CD4-positive, alpha-beta T cell (primary cell): ENCODE measurements at regions of chr11 and their contacts with region 1.

Region 1: DNA sequence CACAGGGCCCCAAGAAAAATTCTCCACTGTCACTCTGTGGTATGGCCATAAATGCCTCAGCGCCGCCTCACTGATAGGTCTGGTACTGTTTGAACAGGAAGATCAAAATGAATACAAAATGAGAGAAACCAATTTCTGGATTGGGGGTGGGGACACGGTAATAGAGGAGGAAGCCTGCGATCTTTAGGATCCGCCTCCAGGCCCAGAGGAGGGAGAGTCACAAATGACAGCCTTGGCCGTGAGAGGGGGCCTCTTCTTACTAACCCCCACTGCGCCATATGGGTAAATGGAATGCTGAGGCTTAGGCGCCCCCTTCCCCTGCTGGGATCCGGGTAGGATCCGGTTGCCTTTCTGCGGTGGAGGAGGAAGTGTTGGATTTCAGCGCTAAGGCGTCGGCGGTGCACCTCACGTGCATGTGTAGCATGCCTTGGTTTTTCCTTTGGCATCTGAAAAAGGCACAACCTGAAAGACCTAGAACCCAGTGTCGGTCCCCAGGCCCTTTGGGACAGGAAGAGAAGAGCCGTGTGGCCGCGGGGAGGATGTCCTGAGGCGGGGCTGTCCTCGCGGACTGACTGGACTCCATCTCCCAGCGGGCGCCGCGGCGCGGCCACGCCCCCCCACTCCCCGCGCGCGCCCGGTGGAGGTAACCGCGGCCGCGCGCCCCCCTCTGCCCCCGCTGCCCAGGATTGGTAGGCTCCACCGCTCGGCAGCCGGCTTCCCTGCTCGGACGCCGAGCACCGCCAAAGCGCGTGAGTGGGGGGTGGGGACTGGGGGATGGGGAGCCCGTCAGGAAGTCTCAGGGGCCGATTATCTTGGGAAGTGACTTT is 718 bp upstream of the MADD start:
- DNase-seq: peak; percentile 74 to 93 (median 84)
- ATAC-seq: peak; percentile 62
- H3K4me3 ChIP-seq: peak overlapping the region; percentile 71
- H3K4me3 Mint-ChIP-seq: peak overlapping the region; percentile 94
- H3K27ac ChIP-seq: peak overlapping the region; percentile 91 to 94
- H3K27ac Mint-ChIP-seq: peak overlapping the region; percentile 99
- H3K4me1 ChIP-seq: peaks cover 58% of the 10 kb centered on the region
- H3K4me1 Mint-ChIP-seq: peaks cover 57% of the 10 kb centered on the region
- H3K27me3 ChIP-seq: no peaks in the 10 kb centered on the region
- H3K27me3 Mint-ChIP-seq: no peaks in the 10 kb centered on the region
- CTCF ChIP-seq: peak; percentile 22

Region 2: GRCh38 chr11:47213985-47214564 is 55.1 kb before region 1 on chr11:
- CTCF ChIA-PET with region 1: interaction called, 3 read pairs
- POLR2A ChIA-PET with region 1: interaction called, 24 read pairs
- intact Hi-C with region 1: loop called (anchors 1 kb)
- DNase-seq: peak; percentile 68 to 92 (median 78)
- ATAC-seq: peak; percentile 70
- H3K4me3 ChIP-seq: peak overlapping the region; percentile 67
- H3K4me3 Mint-ChIP-seq: peak overlapping the region; percentile 100
- H3K27ac ChIP-seq: peak overlapping the region; percentile 80 to 91
- H3K27ac Mint-ChIP-seq: peak overlapping the region; percentile 97
- H3K4me1 ChIP-seq: peaks cover 32% of the 10 kb centered on the region
- H3K4me1 Mint-ChIP-seq: peaks cover 38% of the 10 kb centered on the region
- H3K27me3 ChIP-seq: no peaks in the 10 kb centered on the region
- H3K27me3 Mint-ChIP-seq: no peaks in the 10 kb centered on the region
- CTCF ChIP-seq: no peak

Region 3: DNA sequence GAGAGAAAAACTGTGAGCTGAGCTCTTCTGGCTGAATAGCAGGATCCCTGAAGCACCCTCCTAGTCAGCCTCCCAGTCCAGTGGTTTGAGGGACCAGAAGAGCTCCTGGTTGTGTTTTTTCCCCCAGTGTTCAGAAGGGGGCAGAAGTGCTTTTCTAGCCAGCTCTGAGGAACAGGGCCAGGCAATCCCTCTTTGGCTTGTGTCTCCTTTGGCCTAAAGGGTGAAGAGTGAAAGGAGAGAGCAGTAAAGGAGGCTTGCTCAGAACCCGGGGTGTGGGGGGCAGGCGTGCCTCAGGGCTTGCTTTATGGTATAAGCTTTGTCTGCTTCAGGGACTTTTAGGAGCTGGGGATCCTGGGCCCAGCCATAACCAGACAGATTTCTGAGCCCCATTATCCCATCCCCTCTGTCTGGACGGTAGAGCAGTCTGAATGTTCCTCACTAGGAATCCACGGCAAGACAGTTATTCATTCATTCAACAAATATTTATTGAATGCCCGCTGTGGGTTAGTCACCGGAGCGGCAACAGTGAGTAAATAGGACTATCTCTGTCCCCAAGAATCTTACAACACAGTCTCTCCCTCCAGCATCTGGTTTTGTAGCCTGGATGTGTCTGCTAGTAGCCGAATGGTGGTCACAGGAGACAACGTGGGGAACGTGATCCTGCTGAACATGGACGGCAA is 35.1 kb before region 1 on chr11:
- CTCF ChIA-PET with region 1: interaction called, 3 read pairs
- POLR2A ChIA-PET with region 1: interaction called, 19 read pairs
- intact Hi-C with region 1: loop called (anchors 1 to 5 kb)
- DNase-seq: peak in 8 of 14 experiments; percentile 9 to 69 (median 22)
- ATAC-seq: no peak
- H3K4me3 ChIP-seq: peak overlapping the region; percentile 10
- H3K4me3 Mint-ChIP-seq: peak overlapping the region; percentile 80
- H3K27ac ChIP-seq: peak overlapping the region; percentile 65 to 72
- H3K27ac Mint-ChIP-seq: peak overlapping the region; percentile 94
- H3K4me1 ChIP-seq: peaks cover 24% of the 10 kb centered on the region
- H3K4me1 Mint-ChIP-seq: peaks cover 29% of the 10 kb centered on the region
- H3K27me3 ChIP-seq: no peaks in the 10 kb centered on the region
- H3K27me3 Mint-ChIP-seq: no peaks in the 10 kb centered on the region
- CTCF ChIP-seq: peak; percentile 11

Region 4: DNA sequence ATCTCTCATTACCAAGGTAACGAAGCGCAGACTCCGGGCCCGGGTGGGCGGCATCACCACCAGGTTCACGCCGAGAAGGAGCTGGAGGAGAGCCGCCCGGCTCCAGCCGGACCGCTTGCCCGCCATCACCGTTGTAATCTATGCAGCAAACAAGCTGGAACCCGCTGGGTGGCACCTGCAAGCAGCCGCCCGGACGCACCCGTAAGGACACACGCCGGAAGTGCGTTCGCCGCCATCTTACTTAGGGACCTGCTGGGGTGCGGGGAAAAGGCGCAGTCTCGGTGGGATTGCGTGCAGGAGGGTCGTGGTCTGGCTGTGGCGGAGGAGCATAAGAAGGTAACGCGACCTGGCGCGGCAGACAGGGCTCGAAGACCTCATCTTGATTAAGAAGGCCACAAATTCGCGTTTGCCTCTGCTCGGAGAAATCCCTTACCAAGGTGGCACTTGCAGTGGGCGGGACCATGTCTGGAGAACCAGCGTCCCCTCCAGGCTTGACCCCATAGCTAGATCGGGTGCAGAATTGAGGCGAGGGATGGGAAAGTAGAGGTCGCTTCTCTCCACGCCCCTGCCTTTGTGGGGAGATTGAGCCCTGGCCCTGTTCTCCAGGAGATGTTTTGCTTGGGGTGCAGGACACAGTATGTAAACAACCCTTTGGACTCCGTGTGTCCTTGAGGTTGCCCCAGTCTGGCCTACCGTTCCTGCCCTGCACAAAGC is 20.4 kb before region 1 on chr11 and contains the start of gene ACP2:
- CTCF ChIA-PET with region 1: interaction called, 10 read pairs
- POLR2A ChIA-PET with region 1: interaction called, 18 read pairs
- intact Hi-C with region 1: loop called (anchors 1 kb)
- DNase-seq: peak; percentile 78 to 93 (median 82)
- ATAC-seq: peak; percentile 97
- H3K4me3 ChIP-seq: peak within 1 kb of the TSS; percentile 77
- H3K4me3 Mint-ChIP-seq: peak within 1 kb of the TSS; percentile 94
- H3K27ac ChIP-seq: peak within 1 kb of the TSS; percentile 75 to 82
- H3K27ac Mint-ChIP-seq: peak within 1 kb of the TSS; percentile 93
- H3K4me1 ChIP-seq: peaks cover 28% of the 10 kb centered on the region
- H3K4me1 Mint-ChIP-seq: peaks cover 29% of the 10 kb centered on the region
- H3K27me3 ChIP-seq: no peaks in the 10 kb centered on the region
- H3K27me3 Mint-ChIP-seq: no peaks in the 10 kb centered on the region
- CTCF ChIP-seq: no peak
- total RNA-seq, gene ACP2: 16.8 to 17.2 TPM

Region 5: DNA sequence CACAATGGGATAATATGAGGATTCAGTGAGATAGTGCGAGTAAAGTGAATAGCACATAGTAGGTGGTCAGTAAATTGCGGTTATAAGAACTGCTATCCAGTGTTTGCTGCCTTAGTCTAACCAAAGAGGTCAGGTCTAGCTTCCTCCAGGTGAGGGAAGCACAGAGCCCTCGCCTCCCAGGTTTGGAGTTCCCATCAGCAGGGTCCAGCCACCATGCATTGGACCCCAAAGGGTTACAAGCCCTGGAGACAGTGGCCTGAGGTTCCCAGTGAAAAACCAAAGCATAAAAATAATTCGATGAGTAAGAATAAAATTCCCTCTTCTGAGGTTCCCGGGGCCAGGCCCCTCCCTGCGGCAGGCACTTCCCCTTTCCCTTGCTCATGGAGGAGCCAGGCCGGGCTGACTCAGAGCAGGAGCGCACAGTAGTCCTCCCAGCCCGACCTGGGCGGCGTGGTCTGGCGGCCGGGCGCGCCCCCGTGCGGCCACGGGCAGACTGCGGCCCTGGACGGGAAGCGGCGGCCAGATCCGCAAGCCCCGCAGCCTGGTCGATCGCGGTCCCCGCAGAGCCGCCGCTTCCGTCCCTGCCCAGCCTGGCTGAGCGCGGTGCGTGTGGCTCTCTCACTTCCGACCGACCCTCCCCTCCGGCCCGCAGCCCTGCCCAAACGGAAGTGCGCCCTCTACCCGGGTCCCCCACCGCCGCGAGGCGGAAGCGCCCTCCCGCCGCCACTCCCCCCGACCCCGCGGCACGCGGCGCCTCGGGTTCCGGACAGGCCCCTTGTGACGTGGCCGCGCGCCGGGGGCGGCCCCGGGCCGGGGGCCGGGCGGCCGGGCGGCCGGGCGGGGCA is 138.8 kb after region 1 on chr11 and contains the start of gene SLC39A13:
- CTCF ChIA-PET with region 1: no interaction called
- POLR2A ChIA-PET with region 1: no interaction called
- intact Hi-C with region 1: loop called in 1 of 2 experiments (anchors 5 kb)
- DNase-seq: peak; percentile 78 to 95 (median 89)
- ATAC-seq: peak; percentile 86
- H3K4me3 ChIP-seq: peak within 1 kb of the TSS; percentile 74
- H3K4me3 Mint-ChIP-seq: peak within 1 kb of the TSS; percentile 99
- H3K27ac ChIP-seq: peak within 1 kb of the TSS; percentile 84 to 88
- H3K27ac Mint-ChIP-seq: peak within 1 kb of the TSS; percentile 95
- H3K4me1 ChIP-seq: peaks cover 40% of the 10 kb centered on the region
- H3K4me1 Mint-ChIP-seq: peaks cover 17% of the 10 kb centered on the region
- H3K27me3 ChIP-seq: no peaks in the 10 kb centered on the region
- H3K27me3 Mint-ChIP-seq: no peaks in the 10 kb centered on the region
- CTCF ChIP-seq: peak; percentile 84
- total RNA-seq, gene SLC39A13: 36.6 to 39.2 TPM

Region 6: GRCh38 chr11:47426061-47426956 is 157.1 kb after region 1 on chr11 and contains the start of gene PSMC3:
- CTCF ChIA-PET with region 1: no interaction called
- POLR2A ChIA-PET with region 1: interaction called, 3 read pairs
- intact Hi-C with region 1: loop called in 1 of 2 experiments (anchors 1 kb)
- DNase-seq: peak; percentile 93 to 99 (median 98)
- ATAC-seq: peak; percentile 98
- H3K4me3 ChIP-seq: peak within 1 kb of the TSS; percentile 100
- H3K4me3 Mint-ChIP-seq: peak within 1 kb of the TSS; percentile 100
- H3K27ac ChIP-seq: peak within 1 kb of the TSS; percentile 84
- H3K27ac Mint-ChIP-seq: peak within 1 kb of the TSS; percentile 90
- H3K4me1 ChIP-seq: peaks cover 30% of the 10 kb centered on the region
- H3K4me1 Mint-ChIP-seq: peaks cover 25% of the 10 kb centered on the region
- H3K27me3 ChIP-seq: no peaks in the 10 kb centered on the region
- H3K27me3 Mint-ChIP-seq: no peaks in the 10 kb centered on the region
- CTCF ChIP-seq: no peak
- total RNA-seq, gene PSMC3: 51.3 to 59.5 TPM

Region 7: DNA sequence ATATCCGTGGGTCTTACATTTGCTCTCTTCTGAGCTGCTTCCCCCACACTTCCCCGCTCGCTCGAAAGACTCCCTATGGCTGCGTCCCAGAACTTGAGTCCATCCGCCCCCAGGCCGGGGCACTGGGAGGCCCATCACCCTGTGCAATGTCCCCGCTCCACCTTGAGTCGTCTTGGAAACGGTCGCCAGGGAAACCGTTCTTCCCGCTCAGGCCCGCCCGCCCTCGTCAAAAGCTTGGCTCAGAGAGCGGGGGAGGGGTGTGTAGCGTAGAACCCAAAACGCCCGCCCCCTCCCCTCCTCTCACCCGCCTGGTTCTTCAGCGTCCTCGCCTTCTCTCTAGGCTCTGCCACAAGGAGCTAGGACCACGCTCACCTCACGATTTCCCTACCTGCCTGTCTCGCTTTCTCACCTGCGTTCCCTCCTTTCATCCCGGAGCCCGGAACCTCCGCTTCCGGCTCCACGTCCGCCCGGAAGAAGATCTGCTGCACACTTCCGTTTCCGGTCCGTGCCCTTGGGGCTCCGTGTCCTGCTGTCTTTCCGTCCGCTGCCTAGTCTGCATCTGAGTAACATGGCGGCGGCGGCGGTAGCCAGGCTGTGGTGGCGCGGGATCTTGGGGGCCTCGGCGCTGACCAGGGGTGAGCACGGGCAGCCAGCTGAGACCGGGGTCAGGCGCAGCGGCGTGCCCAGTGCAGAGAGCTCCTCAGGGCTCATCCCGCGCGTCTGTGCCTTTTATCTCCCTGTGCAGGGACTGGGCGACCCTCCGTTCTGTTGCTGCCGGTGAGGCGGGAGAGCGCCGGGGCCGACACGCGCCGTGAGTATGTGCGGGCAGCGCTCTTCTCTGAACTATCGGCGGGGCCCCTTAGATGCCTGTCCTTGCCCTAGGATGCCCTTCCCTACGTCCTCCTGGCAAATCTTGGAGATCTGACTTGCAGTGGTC is 309.6 kb after region 1 on chr11 and contains the starts of genes KBTBD4 and NDUFS3:
- CTCF ChIA-PET with region 1: no interaction called
- POLR2A ChIA-PET with region 1: interaction called, 4 read pairs
- intact Hi-C with region 1: loop called in 1 of 2 experiments (anchors 10 kb)
- DNase-seq: peak; percentile 81 to 95 (median 85)
- ATAC-seq: peak; percentile 91
- H3K4me3 ChIP-seq: peak within 1 kb of the TSS; percentile 90
- H3K4me3 Mint-ChIP-seq: peak within 1 kb of the TSS; percentile 99
- H3K27ac ChIP-seq: peak within 1 kb of the TSS; percentile 76 to 81
- H3K27ac Mint-ChIP-seq: peak within 1 kb of the TSS; percentile 91
- H3K4me1 ChIP-seq: peaks cover 38% of the 10 kb centered on the region
- H3K4me1 Mint-ChIP-seq: peaks cover 41% of the 10 kb centered on the region
- H3K27me3 ChIP-seq: no peaks in the 10 kb centered on the region
- H3K27me3 Mint-ChIP-seq: no peaks in the 10 kb centered on the region
- CTCF ChIP-seq: no peak
- total RNA-seq, gene KBTBD4: 29.1 to 30.2 TPM
- total RNA-seq, gene NDUFS3: 139 to 144 TPM